Adrenal gland (tissue), 19 donors: ENCODE measurements at regions of chr2 and their contacts with region 1.

Region 1: DNA sequence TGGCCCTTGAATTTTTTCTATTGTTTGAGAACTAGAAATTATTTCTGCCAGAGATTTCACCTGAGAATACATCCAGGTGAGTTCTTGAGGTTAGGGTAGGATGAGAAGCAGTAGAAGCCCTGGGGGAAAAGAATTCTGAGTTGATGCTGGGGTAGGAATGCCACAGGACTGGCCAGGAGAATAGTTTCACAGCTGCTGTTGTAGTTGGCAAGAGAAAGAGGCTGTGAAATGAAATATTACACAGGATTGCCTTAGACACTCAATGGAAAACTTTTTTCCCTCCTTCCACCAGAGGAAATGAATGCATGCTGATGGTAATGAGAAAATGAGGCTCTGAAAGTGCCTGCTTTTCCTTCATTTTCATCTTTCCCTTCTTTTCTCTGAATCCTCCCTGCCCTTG is 54.6 kb downstream of the PRKCE start:
- DNase-seq: no peak
- H3K4me3 ChIP-seq: no peak overlapping the region
- H3K27ac ChIP-seq: peak overlapping the region in 1 of 5 donors; percentile 61
- H3K4me1 ChIP-seq: peaks cover 0 to 27% of the 10 kb centered on the region in 2 donors
- H3K27me3 ChIP-seq: no peaks in the 10 kb centered on the region
- CTCF ChIP-seq: no peak
- POLR2A ChIP-seq: no peak

Region 2: DNA sequence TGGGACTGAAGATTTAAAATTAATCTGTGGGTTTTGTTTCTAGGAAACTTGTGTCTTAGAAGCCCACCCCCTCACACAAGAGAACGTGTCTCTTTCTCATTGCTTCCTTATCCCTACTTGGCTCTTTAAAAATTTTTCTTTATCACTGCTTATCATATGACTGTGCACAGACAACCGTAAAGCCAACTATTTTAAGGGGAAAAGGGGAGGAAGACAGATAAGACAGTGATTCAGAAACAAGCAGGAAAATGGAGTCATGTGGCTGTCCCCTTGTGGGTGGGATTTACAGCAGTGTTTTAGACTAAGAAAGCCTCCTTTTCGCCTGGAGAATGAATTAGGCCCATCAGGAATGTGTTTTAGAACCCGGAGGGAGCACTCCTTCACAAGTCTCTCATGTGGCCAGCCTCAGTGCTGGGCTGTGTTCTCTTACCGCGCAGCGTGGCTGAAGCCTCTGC is 37.0 kb before region 1 on chr2:
- intact Hi-C with region 1: loop called in 1 of 2 experiments (anchors 5 kb)
- DNase-seq: peak in 4 of 7 donors; percentile 30 to 47 (median 41)
- H3K4me3 ChIP-seq: no peak overlapping the region
- H3K27ac ChIP-seq: peak overlapping the region in 3 of 5 donors; percentile 53 to 82 (median 81)
- H3K4me1 ChIP-seq: peaks cover 9 to 14% of the 10 kb centered on the region in 2 donors
- H3K27me3 ChIP-seq: no peaks in the 10 kb centered on the region
- CTCF ChIP-seq: no peak
- POLR2A ChIP-seq: no peak

Region 3: DNA sequence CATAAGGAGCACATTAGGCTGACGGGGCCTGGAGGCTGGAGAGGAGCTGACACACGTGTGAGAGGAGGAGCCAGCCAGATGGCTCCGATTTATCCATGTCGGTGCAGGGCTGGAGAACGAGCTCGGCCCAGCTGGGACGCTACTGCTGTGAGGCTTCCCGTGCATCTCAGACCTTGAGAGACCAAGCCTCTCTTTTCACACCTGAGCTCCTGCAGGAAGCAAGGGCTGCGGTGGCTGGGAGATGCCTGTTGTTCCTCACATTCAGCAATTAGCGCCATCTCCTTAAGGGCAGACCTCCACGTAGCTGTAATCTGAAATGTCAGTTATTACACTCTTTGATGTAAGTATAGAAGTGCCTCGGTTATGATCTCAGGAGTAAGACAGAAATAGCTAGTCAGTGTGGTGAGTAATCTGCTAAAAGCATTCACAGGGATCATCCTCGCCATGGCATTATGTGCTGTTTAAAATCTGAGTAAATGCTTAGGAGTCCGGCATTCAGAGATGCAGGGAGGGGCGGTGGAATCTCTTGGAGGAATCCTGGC is 53.3 kb after region 1 on chr2:
- intact Hi-C with region 1: no loop called
- DNase-seq: peak in 1 of 7 donors; percentile 69
- H3K4me3 ChIP-seq: no peak overlapping the region
- H3K27ac ChIP-seq: peak overlapping the region in 1 of 5 donors; percentile 26
- H3K4me1 ChIP-seq: no peaks in the 10 kb centered on the region
- H3K27me3 ChIP-seq: no peaks in the 10 kb centered on the region
- CTCF ChIP-seq: no peak
- POLR2A ChIP-seq: no peak

Region 4: DNA sequence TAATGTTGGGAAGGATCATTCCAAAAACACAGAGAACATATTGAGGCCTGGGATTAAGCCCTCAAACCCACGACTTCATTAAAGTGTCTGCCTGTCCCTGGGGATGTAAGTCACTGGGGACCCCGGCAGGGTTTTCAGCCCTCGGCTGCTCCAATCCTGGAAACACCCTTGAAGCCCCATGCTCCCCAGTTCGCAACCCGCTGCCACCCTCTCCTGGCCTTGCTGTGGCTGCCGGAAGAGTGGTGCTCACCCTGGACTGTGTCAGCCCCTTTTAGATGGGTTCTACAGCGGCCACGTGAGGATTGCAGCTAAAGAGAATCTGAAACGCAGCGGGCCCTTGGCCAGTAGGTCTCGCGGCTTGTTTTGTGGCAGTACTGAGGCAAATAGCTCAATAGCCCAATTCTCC is 671.1 kb after region 1 on chr2:
- intact Hi-C with region 1: no loop called
- DNase-seq: peak in 2 of 7 donors; percentile 17 to 35
- H3K4me3 ChIP-seq: no peak overlapping the region
- H3K27ac ChIP-seq: peak overlapping the region in 1 of 5 donors; percentile 3
- H3K4me1 ChIP-seq: no peaks in the 10 kb centered on the region
- H3K27me3 ChIP-seq: no peaks in the 10 kb centered on the region
- CTCF ChIP-seq: no peak
- POLR2A ChIP-seq: no peak